ENCODE measurements at regions of chr13 and their contacts with region 1.

Region 1: DNA sequence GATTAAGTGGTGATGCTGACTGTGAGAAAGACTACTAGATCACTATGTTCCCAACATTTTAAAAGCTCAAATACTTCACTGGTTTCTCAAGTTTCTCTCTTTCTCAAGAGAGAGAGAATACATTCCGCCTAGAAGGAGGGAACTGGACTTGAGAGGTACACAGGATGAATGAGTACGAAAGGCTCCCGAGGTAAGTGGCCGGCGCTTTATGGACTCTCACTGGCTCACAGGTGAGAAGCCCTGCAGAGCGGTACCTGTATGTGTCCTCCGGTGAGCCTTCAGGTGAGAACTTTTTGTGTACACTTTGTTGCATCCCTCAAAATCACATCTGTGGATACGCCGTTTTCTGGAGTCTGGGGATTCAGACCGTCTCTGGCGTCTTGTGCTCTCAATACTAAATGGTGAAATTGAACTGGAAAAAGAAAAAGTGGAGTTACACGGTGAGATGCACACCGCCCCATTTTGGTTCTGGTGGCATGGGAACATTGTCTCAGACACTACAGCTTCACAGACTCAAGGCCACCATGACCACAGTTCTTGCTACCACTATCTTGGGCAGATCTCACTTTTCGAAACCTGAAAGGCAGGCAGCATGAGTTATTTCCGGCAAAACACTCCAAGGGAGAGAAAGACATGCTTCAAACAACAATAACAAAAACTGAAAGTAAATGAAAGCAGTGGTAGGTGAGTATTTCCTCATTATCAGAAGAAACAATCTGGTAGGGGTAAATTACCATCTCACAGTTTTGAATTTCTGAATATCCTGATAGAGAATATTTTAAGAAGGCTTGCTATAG is 418.9 kb downstream of the KLF12 start:
- DNase-seq: peak; percentile 78
- H3K4me3 Mint-ChIP-seq: peak overlapping the region; percentile 67
- H3K27ac Mint-ChIP-seq: peak overlapping the region; percentile 84
- H3K4me1 Mint-ChIP-seq: peaks cover 44% of the 10 kb centered on the region
- H3K27me3 Mint-ChIP-seq: peaks cover 1% of the 10 kb centered on the region

Region 2: DNA sequence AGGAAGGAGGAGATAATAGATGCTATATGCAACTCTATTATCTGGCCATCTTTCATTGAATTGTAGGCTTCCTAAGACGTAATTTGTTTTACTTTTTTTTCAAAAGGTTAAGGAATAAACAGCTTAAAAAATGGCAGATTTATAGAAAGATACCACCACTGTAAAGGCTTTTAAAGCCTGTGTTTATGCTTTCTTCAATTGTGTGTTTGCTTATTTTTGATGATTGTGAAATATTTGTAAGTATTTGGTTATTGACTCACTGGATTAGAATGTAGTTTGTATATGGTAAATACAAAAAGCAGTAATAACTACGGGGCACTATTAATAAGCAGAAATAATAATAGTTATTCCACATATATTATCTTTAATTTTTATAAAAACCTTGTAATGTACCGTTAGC is 218.6 kb before region 1 on chr13:
- CTCF ChIA-PET with region 1: no interaction called
- POLR2A ChIA-PET with region 1: no interaction called
- DNase-seq: no peak
- H3K4me3 Mint-ChIP-seq: no peak overlapping the region
- H3K27ac Mint-ChIP-seq: no peak overlapping the region
- H3K4me1 Mint-ChIP-seq: no peaks in the 10 kb centered on the region
- H3K27me3 Mint-ChIP-seq: no peaks in the 10 kb centered on the region

Region 3: GRCh38 chr13:73702419-73703071 is 12.8 kb before region 1 on chr13:
- CTCF ChIA-PET with region 1: interaction called, 4 read pairs
- POLR2A ChIA-PET with region 1: interaction called, 16 read pairs
- DNase-seq: peak; percentile 49
- H3K4me3 Mint-ChIP-seq: peak overlapping the region; percentile 64
- H3K27ac Mint-ChIP-seq: peak overlapping the region; percentile 84
- H3K4me1 Mint-ChIP-seq: peaks cover 44% of the 10 kb centered on the region
- H3K27me3 Mint-ChIP-seq: no peaks in the 10 kb centered on the region

Region 4: DNA sequence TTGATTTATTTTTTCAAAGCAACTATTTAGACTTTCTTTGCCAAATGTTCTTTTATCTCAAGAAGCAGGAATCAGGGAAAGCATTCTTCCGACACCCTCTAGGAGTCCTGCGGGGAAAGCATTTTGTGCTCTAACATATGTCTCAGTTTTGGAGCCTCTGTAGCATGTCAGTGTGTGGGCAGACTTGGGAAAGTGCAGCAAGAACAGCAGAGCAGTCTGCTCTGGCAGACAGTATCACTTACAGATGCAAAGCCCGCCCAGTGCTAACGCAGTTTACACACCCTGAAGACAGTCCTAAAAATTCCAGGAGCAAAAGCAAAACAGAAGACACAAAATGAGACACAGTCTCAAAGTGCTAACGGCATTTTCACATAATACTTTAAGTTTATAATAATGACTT is 25.4 kb after region 1 on chr13:
- CTCF ChIA-PET with region 1: no interaction called
- POLR2A ChIA-PET with region 1: no interaction called
- DNase-seq: no peak
- H3K4me3 Mint-ChIP-seq: no peak overlapping the region
- H3K27ac Mint-ChIP-seq: no peak overlapping the region
- H3K4me1 Mint-ChIP-seq: peaks cover 16% of the 10 kb centered on the region
- H3K27me3 Mint-ChIP-seq: no peaks in the 10 kb centered on the region